ENCODE measurements at regions of chr22 and their contacts with region 1.

Region 1: GRCh38 chr22:22959147-22959827 is 71.7 kb downstream of the IGLL5 start:
- DNase-seq: peak; percentile 55 to 84 (median 66)
- ATAC-seq: no peak
- H3K4me3 ChIP-seq: no peak overlapping the region
- H3K4me3 Mint-ChIP-seq: no peak overlapping the region
- H3K27ac ChIP-seq: no peak overlapping the region
- H3K27ac Mint-ChIP-seq: no peak overlapping the region
- H3K4me1 ChIP-seq: peaks cover 4% of the 10 kb centered on the region
- H3K4me1 Mint-ChIP-seq: peaks cover 4% of the 10 kb centered on the region
- H3K27me3 ChIP-seq: peaks cover 0 to 10% of the 10 kb centered on the region in 2 experiments
- H3K27me3 Mint-ChIP-seq: peaks cover 53% of the 10 kb centered on the region
- CTCF ChIP-seq: peak; percentile 82

Region 2: GRCh38 chr22:22463855-22464540 is 495.3 kb before region 1 on chr22:
- CTCF ChIA-PET with region 1: no interaction called
- POLR2A ChIA-PET with region 1: no interaction called
- intact Hi-C with region 1: loop called (anchors 5 to 10 kb)
- DNase-seq: peak in 13 of 14 experiments; percentile 3 to 78 (median 28)
- ATAC-seq: no peak
- H3K4me3 ChIP-seq: no peak overlapping the region
- H3K4me3 Mint-ChIP-seq: no peak overlapping the region
- H3K27ac ChIP-seq: no peak overlapping the region
- H3K27ac Mint-ChIP-seq: no peak overlapping the region
- H3K4me1 ChIP-seq: no peaks in the 10 kb centered on the region
- H3K4me1 Mint-ChIP-seq: no peaks in the 10 kb centered on the region
- H3K27me3 ChIP-seq: peaks cover 17 to 19% of the 10 kb centered on the region in 2 experiments
- H3K27me3 Mint-ChIP-seq: peaks cover 66% of the 10 kb centered on the region
- CTCF ChIP-seq: peak; percentile 88

Region 3: GRCh38 chr22:22593964-22594656 is 365.2 kb before region 1 on chr22:
- CTCF ChIA-PET with region 1: no interaction called
- POLR2A ChIA-PET with region 1: no interaction called
- intact Hi-C with region 1: loop called (anchors 2 kb)
- DNase-seq: peak; percentile 7 to 76 (median 42)
- ATAC-seq: peak; percentile 60
- H3K4me3 ChIP-seq: no peak overlapping the region
- H3K4me3 Mint-ChIP-seq: no peak overlapping the region
- H3K27ac ChIP-seq: no peak overlapping the region
- H3K27ac Mint-ChIP-seq: no peak overlapping the region
- H3K4me1 ChIP-seq: peaks cover 3% of the 10 kb centered on the region
- H3K4me1 Mint-ChIP-seq: no peaks in the 10 kb centered on the region
- H3K27me3 ChIP-seq: peaks cover 0 to 3% of the 10 kb centered on the region in 2 experiments
- H3K27me3 Mint-ChIP-seq: peaks cover 6% of the 10 kb centered on the region
- CTCF ChIP-seq: peak; percentile 76

Region 4: DNA sequence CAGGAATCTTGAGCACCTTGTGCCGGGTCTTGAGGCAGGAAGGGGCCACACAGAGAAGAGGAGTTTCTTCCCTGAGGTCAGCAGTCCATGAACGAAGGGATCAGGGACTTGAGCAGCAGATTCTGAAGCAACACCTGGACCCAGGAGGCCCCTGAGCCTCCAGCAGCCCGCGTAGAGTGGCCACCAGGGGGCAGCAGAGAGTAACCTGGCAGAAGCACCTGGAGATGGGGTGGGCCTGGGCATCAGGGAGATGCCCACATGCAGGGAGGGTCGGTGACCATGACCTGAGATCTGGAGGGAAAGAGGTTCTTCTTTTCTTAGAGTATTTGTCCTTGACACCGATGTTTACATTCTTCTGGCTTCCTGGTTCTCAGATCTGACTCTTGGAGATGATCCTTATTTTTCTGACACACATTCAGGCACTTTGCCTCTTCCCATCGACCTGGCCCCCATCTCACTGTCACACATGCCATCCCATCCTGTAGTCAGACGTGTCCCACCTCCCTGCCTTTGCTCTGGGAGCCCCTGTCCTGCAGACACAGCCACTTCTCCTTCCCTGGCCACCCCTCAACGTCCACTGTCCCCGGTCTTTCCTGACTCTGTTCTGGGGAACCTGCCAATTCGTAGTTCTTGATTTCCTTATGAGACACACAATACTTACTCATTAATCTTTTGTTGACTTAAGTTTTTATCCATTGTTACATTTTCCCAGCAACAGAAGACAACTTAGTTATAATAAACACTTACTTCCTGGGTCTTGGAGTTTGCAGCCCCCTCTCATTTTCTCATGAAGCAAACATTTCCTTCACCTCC is 248.4 kb before region 1 on chr22:
- CTCF ChIA-PET with region 1: interaction called, 3 read pairs
- POLR2A ChIA-PET with region 1: no interaction called
- intact Hi-C with region 1: loop called (anchors 1 to 5 kb)
- DNase-seq: peak; percentile 56 to 87 (median 76)
- ATAC-seq: peak; percentile 61
- H3K4me3 ChIP-seq: no peak overlapping the region
- H3K4me3 Mint-ChIP-seq: no peak overlapping the region
- H3K27ac ChIP-seq: no peak overlapping the region
- H3K27ac Mint-ChIP-seq: no peak overlapping the region
- H3K4me1 ChIP-seq: no peaks in the 10 kb centered on the region
- H3K4me1 Mint-ChIP-seq: no peaks in the 10 kb centered on the region
- H3K27me3 ChIP-seq: no peaks in the 10 kb centered on the region
- H3K27me3 Mint-ChIP-seq: no peaks in the 10 kb centered on the region
- CTCF ChIP-seq: peak; percentile 96

Region 5: DNA sequence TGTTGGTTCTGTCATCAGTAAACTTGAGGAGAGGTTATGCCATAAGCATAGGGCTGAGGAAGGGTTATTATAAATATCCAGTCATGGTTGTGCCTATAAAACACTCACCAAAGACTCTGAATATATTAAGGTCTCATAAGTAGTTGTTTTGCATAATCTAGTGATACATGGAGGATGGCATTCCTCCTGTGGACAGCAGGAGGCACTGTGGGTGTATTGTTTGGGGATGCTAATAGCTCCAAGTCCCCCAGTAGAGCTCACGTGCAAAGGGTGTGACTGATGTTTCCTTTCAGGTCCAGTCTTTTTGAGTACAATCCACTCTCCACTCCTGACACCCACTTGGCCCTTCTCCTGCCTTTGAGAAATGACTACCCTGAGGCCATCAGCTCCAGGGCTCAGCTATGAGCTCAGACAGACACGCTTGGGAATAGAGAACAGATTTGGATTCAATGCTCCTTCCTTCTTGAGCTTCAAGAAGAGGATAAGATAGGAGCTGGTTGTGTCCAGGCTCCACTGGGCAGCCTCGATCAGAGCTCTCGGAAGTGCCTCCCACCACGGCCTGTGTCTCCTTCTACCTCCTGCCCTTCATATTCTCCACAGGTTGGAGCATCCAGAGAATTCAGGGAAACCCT is 156.8 kb before region 1 on chr22:
- CTCF ChIA-PET with region 1: interaction called, 4 read pairs
- POLR2A ChIA-PET with region 1: no interaction called
- intact Hi-C with region 1: loop called (anchors 1 to 2 kb)
- DNase-seq: peak in 10 of 14 experiments; percentile 38 to 81 (median 57)
- ATAC-seq: peak; percentile 72
- H3K4me3 ChIP-seq: no peak overlapping the region
- H3K4me3 Mint-ChIP-seq: no peak overlapping the region
- H3K27ac ChIP-seq: no peak overlapping the region
- H3K27ac Mint-ChIP-seq: no peak overlapping the region
- H3K4me1 ChIP-seq: peaks cover 25% of the 10 kb centered on the region
- H3K4me1 Mint-ChIP-seq: peaks cover 55% of the 10 kb centered on the region
- H3K27me3 ChIP-seq: peaks cover 0 to 2% of the 10 kb centered on the region in 2 experiments
- H3K27me3 Mint-ChIP-seq: no peaks in the 10 kb centered on the region
- CTCF ChIP-seq: peak; percentile 83

Region 6: GRCh38 chr22:22948651-22949571 is 10.4 kb before region 1 on chr22:
- CTCF ChIA-PET with region 1: no interaction called
- POLR2A ChIA-PET with region 1: no interaction called
- intact Hi-C with region 1: no loop called
- DNase-seq: no peak
- ATAC-seq: no peak
- H3K4me3 ChIP-seq: no peak overlapping the region
- H3K4me3 Mint-ChIP-seq: no peak overlapping the region
- H3K27ac ChIP-seq: no peak overlapping the region
- H3K27ac Mint-ChIP-seq: no peak overlapping the region
- H3K4me1 ChIP-seq: no peaks in the 10 kb centered on the region
- H3K4me1 Mint-ChIP-seq: no peaks in the 10 kb centered on the region
- H3K27me3 ChIP-seq: peaks cover 4 to 10% of the 10 kb centered on the region in 2 experiments
- H3K27me3 Mint-ChIP-seq: peaks cover 33% of the 10 kb centered on the region
- CTCF ChIP-seq: no peak

Region 7: GRCh38 chr22:23128269-23129108 is 169.2 kb after region 1 on chr22:
- CTCF ChIA-PET with region 1: interaction called, 24 read pairs
- POLR2A ChIA-PET with region 1: interaction called, 3 read pairs
- intact Hi-C with region 1: loop called (anchors 1 kb)
- DNase-seq: peak; percentile 59 to 86 (median 70)
- ATAC-seq: peak; percentile 89
- H3K4me3 ChIP-seq: no peak overlapping the region
- H3K4me3 Mint-ChIP-seq: no peak overlapping the region
- H3K27ac ChIP-seq: no peak overlapping the region
- H3K27ac Mint-ChIP-seq: no peak overlapping the region
- H3K4me1 ChIP-seq: peaks cover 7% of the 10 kb centered on the region
- H3K4me1 Mint-ChIP-seq: peaks cover 5% of the 10 kb centered on the region
- H3K27me3 ChIP-seq: no peaks in the 10 kb centered on the region
- H3K27me3 Mint-ChIP-seq: no peaks in the 10 kb centered on the region
- CTCF ChIP-seq: peak; percentile 82

Region 8: DNA sequence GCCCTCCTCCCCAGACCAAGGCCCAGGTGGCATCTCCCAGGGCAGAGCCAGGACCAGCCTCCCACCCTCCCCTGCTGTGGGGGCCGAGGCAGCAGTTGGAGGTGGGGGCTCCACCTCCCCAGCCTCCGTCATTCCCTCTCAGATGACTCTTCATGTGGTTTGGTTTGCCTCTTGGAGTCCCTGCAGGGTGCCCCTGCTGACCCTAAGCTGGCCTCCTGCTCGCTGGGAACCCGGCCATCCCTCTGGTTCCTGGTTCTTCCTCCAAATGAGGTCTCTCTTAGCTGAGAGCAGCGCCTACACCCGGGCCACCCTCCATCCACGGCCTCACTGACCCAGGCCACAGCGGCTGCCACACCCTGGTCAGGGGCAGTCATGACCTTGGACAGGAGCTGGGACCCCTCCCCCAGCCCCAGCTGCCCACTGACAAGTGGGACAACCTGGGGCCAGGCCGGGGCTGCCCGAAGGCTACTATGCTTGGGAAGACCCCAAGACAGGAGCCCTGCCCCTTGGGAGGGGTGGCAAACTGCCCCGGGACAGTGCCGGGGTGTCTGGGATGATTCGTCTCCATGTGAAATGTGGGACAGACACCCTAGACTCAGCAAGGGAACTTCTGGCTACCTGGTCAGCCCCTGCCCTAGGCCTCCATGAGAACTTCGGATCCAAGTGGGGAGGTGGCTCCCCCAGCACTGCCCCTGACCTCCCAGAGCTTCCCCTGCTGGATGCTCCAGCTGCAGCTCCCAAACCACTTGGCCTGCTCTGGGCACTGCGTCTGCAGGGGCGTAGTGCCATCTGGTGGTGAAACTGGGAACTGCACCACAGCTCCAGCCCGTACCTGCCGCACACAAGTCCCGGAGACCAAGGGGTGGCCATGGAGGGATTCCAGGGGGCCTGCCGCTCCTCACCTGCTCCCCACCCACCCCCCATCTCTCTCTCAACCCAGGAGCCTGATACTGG is 426.3 kb after region 1 on chr22:
- CTCF ChIA-PET with region 1: interaction called, 12 read pairs
- POLR2A ChIA-PET with region 1: no interaction called
- intact Hi-C with region 1: loop called (anchors 1 kb)
- DNase-seq: peak; percentile 64 to 88 (median 78)
- ATAC-seq: peak; percentile 86
- H3K4me3 ChIP-seq: no peak overlapping the region
- H3K4me3 Mint-ChIP-seq: no peak overlapping the region
- H3K27ac ChIP-seq: no peak overlapping the region
- H3K27ac Mint-ChIP-seq: no peak overlapping the region
- H3K4me1 ChIP-seq: peaks cover 6% of the 10 kb centered on the region
- H3K4me1 Mint-ChIP-seq: no peaks in the 10 kb centered on the region
- H3K27me3 ChIP-seq: no peaks in the 10 kb centered on the region
- H3K27me3 Mint-ChIP-seq: peaks cover 3% of the 10 kb centered on the region
- CTCF ChIP-seq: peak; percentile 98